AG04449 (cell line): ENCODE measurements at regions of chr11 and their contacts with region 1.

Region 1: DNA sequence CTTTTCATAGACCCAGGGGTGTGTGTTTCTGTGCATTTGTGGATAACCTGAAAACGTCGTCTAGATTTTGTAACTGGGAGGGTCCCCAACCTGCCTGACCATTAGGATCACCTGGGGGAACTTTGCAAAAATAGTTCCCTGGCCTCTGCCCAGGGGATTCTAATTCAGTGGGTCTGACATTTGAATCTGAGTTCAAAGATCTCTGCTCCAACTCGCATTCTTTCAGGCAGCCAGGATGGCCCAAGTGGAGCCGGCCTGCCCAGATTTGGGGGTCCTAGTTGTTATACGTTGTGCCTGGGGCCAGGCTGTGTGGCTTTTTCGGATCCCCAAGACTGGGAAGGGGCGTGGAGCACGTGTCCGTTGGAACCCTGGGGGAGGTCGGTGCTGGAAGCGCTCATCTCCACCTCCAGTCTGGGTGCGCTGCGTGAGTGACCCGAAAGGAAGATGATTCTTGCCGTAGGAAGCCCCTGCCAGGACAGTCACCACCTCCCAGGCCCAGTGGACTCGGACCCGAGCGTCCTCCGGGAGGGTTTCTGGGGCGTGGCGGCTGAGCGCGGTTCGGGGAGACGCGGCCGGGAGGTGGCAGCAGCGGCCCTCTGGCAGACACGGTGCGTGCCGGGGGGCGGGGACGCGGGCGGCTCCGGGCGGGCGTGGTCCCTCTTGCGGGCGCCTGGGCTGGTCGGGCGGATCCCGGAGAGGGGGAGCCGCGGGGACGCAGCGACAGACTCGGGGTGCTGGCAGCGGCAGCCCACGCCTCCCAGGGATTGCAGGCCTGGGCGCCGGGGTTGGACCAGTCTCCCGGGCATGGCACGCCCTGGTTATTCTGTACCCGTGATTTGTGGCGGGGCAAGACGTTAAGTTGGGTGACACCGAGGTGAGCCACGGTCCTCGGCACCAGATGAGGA is 29.2 kb upstream of the PLET1 start:
- DNase-seq: no peak
- H3K4me3 ChIP-seq: peak overlapping the region; percentile 73
- CTCF ChIP-seq: peak; percentile 86

Region 2: DNA sequence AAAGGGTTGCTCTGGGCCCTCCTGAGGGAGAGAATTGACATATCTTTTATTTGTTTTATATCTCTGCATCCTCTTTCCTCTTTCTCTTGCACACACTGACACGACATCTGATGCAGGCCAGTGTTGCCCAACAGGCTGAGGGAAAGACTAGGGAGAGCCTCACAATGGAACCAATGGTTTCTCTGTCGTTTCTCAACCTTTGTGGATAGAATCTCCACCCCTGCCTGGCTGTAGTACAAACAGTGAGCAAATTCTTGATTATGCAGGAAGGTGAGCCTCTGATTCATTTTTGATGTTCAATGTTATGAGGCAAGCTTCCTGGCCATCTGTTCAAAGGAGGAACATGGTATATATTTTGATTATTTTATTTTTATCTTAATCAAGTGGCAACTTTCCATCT is 20.6 kb after region 1 on chr11:
- CTCF ChIA-PET with region 1: no interaction called
- POLR2A ChIA-PET with region 1: no interaction called
- DNase-seq: no peak
- H3K4me3 ChIP-seq: no peak overlapping the region
- CTCF ChIP-seq: no peak

Region 3: DNA sequence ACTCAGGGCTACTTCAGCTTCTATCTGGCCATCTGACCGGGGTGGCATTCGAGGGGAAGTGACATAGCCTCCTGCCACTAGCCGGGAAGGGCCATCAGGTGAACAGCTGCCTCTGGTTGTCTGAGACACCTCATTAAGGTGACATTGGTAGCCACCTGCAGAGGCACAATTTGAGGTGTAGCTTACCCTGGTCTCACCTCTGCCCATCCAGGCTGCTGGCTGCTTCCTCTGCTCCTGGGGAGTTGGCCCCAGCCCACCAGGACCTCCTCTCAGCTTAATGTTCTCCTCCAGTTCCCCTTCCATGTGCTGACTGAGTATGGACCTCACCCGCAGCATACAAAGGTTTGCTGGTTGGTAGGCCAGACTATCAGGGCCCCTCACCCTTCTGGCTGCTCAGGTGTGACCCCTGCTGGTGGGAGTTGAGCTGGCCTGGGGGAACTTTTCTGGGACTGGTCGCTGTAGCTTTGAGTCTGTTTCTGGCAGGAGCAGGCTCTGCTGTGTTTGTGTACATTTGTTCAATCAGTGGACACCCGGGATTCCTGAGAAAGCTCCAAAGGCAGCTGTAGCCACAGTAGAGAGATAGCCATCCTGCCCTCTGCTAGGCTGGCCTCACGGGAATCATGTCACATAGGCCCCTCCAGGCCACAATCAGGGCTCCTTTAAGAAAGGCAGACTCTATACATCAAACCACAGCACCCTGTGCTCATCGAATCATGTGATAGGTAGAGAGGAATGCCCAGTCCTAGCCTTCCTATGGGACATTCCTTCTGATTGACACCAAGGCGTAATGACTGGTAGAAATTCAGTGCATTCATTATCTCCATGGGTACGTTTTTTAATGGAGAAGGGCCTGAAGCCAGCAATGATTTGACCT is 265.9 kb after region 1 on chr11:
- CTCF ChIA-PET with region 1: interaction called, 41 read pairs
- POLR2A ChIA-PET with region 1: no interaction called
- DNase-seq: no peak
- H3K4me3 ChIP-seq: no peak overlapping the region
- CTCF ChIP-seq: peak; percentile 78

Region 4: GRCh38 chr11:113289431-113290187 is 999.8 kb after region 1 on chr11:
- CTCF ChIA-PET with region 1: interaction called, 27 read pairs
- POLR2A ChIA-PET with region 1: no interaction called
- DNase-seq: no peak
- H3K4me3 ChIP-seq: no peak overlapping the region
- CTCF ChIP-seq: peak; percentile 94